ENCODE measurements at regions of chr21 and their contacts with region 1.

Region 1: GRCh38 chr21:37675202-37675801 is 241.0 kb downstream of the KCNJ6 start:
- DNase-seq: peak; percentile 43 to 72 (median 65)
- H3K4me3 ChIP-seq: no peak overlapping the region
- H3K27ac ChIP-seq: no peak overlapping the region
- H3K4me1 ChIP-seq: peaks cover 0 to 2% (median under 1%) of the 10 kb centered on the region in 4 experiments
- H3K27me3 ChIP-seq: peaks cover 0 to 20% (median 15%) of the 10 kb centered on the region in 5 experiments

Region 2: GRCh38 chr21:37658817-37659458 is 16.4 kb before region 1 on chr21:
- CTCF ChIA-PET with region 1: interaction called, 13 read pairs
- POLR2A ChIA-PET with region 1: no interaction called
- DNase-seq: peak in 1 of 3 donors; percentile 2
- H3K4me3 ChIP-seq: no peak overlapping the region
- H3K27ac ChIP-seq: no peak overlapping the region
- H3K4me1 ChIP-seq: no peaks in the 10 kb centered on the region
- H3K27me3 ChIP-seq: peaks cover 0 to 5% (median 0%) of the 10 kb centered on the region in 5 experiments

Region 3: DNA sequence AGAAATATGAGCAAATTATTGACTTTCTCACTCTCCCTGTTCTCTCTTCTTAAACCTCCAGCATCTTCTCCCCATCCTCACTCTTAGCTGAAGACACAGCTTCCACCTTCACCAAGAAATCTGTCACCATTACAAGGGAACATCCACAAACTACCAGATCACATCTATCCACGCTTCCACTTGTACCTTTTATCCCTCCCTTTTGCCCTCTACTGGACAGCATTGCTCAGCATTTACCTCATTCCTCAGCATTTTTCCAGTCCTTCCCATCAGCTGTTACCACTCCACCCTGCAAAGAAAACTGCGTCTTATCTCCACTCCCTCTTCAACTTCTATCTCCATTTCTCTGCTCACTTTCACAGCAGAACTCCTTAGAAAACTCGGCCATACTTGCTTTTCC is 198.4 kb after region 1 on chr21:
- CTCF ChIA-PET with region 1: no interaction called
- POLR2A ChIA-PET with region 1: no interaction called
- DNase-seq: no peak
- H3K4me3 ChIP-seq: no peak overlapping the region
- H3K27ac ChIP-seq: no peak overlapping the region
- H3K4me1 ChIP-seq: no peaks in the 10 kb centered on the region
- H3K27me3 ChIP-seq: peaks cover 0 to 8% (median 0%) of the 10 kb centered on the region in 5 experiments

Region 4: DNA sequence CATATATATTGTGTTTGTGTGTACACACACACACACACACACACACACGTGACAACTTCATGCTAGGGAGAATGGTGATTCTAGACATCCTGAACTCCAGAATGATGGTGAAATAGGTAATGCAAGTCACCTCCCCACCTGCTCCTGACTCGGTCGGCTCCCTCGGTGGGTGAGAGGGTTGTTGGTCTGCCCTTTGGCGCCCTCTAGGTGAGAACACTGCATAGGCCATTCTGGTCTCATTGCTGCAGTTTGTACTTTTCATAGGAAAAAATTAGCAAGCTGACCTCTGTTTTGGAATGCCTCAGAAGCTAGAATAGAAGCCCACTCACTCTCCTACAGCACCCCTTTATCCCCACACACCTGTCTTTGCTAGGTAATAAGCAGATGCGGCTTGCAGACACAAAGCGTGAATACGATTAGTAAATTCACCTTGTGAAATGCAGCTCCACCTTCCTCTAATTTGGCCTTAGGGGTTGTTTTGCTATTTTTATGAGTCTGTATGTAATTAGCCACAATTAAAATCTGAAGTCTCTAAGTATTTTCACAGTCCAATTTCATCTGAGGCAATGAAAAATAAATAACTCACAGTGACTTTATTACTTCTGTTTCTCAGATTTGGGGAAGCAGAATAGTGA is 451.5 kb after region 1 on chr21:
- CTCF ChIA-PET with region 1: interaction called, 10 read pairs
- POLR2A ChIA-PET with region 1: no interaction called
- DNase-seq: peak; percentile 48 to 76 (median 76)
- H3K4me3 ChIP-seq: no peak overlapping the region
- H3K27ac ChIP-seq: no peak overlapping the region
- H3K4me1 ChIP-seq: no peaks in the 10 kb centered on the region
- H3K27me3 ChIP-seq: peaks cover 0 to 11% (median 5%) of the 10 kb centered on the region in 5 experiments